Activated B cell treated with CpG ODN at 0.5 μM for 24 hours (primary cell): ENCODE measurements at regions of chr1 and their contacts with region 1.

Region 1: DNA sequence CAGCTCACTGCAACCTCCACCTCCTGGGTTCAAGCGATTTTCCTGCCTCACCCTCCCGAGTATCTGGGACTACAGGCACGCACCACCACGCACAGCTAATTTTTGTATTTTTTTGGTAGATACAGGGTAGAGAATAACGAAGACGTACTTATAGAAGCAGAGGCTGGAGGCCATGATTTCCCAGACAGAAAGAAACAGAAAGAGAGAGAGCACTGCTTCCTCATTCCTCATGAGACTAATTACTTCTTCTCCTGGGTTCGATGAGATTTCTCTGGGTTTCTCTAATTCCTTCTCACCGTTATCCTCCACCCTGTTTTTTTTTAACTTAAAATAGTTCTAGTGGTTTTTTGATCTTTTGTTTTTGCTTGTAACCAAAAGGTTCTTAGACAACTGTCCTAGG is 23.4 kb upstream of the PTP4A2 start:
- DNase-seq: no peak
- ATAC-seq: no peak
- H3K4me3 Mint-ChIP-seq: peak overlapping the region; percentile 37
- H3K27ac Mint-ChIP-seq: peak overlapping the region; percentile 90
- H3K4me1 Mint-ChIP-seq: peaks cover 39% of the 10 kb centered on the region
- H3K27me3 Mint-ChIP-seq: no peaks in the 10 kb centered on the region
- CTCF ChIP-seq: no peak

Region 2: DNA sequence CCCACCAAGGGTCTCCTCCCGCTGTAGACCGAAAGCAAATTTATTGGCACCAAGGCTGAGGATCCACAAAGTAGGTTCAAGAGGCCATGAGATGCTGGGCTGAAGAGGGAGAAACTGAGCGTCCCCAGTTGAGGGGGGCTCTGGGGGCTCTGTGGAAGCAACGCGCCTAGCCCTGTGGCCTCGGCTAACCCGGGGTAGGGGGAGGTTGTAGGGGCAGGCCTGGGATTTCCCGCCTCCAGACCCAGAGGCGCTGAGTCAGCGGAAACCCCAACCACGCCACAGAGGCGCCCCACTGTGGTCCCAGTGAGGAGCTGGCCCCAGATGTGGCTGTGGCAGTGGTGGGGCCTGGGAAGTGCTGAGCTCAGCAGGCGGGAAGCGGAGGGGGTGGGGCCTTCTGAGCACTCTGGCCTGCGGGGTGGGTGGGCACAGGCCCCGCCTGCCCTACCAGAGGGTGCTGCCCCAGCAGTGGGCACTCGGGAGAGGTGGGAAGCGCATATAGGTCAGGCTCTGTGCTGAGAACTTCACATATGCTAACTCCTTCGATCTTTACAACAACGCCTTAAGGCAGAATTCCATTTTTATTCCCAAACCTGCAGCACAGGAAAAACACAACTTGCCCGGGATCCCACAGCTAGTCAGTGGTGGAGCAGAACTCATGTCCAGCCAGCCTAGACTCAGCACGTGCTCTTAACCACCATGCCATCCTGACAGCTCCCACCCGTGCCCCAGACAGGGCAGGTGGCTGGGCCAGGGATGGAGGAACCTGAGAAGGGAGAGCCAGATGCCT is 256.3 kb before region 1 on chr1:
- CTCF ChIA-PET with region 1: no interaction called
- POLR2A ChIA-PET with region 1: interaction called, 15 read pairs
- intact Hi-C with region 1: no loop called
- DNase-seq: peak; percentile 27
- ATAC-seq: peak; percentile 76
- H3K4me3 Mint-ChIP-seq: peak overlapping the region; percentile 49
- H3K27ac Mint-ChIP-seq: no peak overlapping the region
- H3K4me1 Mint-ChIP-seq: peaks cover 39% of the 10 kb centered on the region
- H3K27me3 Mint-ChIP-seq: peaks cover 44% of the 10 kb centered on the region
- CTCF ChIP-seq: no peak

Region 3: GRCh38 chr1:32082022-32082421 is 120.5 kb after region 1 on chr1:
- CTCF ChIA-PET with region 1: no interaction called
- POLR2A ChIA-PET with region 1: no interaction called
- intact Hi-C with region 1: no loop called
- DNase-seq: no peak
- ATAC-seq: no peak
- H3K4me3 Mint-ChIP-seq: peak overlapping the region; percentile 26
- H3K27ac Mint-ChIP-seq: peak overlapping the region; percentile 77
- H3K4me1 Mint-ChIP-seq: peaks cover 18% of the 10 kb centered on the region
- H3K27me3 Mint-ChIP-seq: no peaks in the 10 kb centered on the region
- CTCF ChIP-seq: no peak